CD8-positive, alpha-beta memory T cell (primary cell): ENCODE measurements at regions of chr7 and their contacts with region 1.

Region 1: DNA sequence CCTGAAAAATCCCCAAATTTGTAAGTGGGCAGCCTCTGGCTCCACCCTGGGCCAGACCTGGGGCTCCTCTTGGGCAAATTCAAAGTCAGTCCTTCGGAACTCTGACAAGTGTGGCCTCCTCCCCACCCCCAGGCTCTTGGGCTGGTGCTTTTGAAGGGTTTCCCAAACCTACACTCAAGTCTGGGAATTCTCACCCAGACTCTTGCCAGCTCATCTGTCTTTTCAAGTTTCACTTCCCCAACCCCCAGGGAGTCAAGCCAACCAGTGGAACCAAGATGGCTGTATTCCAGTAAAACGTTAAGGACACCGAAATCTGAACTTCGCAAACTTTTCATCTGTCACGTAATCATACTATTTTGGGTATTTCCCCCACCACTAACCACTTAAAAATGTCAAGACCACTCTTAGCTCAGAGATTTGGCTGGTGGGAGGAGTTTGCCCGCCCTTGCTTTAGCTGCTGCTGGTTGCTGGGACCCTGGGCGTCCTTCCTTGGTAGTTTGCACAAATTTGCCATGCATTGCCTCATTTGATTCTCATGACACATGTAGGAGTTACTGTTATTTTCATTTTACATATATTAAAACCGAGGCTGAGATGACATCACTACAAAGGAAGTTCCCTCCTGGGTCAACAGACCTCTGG is 1.7 kb upstream of the MYO1G start:
- DNase-seq: peak; percentile 58 to 86 (median 65)
- H3K4me3 ChIP-seq: peak overlapping the region; percentile 91
- H3K4me3 Mint-ChIP-seq: peak overlapping the region; percentile 96 to 98 (median 98)
- H3K27ac ChIP-seq: peak overlapping the region; percentile 94
- H3K27ac Mint-ChIP-seq: peak overlapping the region; percentile 87 to 100 (median 93)
- H3K4me1 ChIP-seq: peaks cover 76% of the 10 kb centered on the region
- H3K4me1 Mint-ChIP-seq: peaks cover 72 to 95% (median 76%) of the 10 kb centered on the region in 3 donors
- H3K27me3 ChIP-seq: no peaks in the 10 kb centered on the region
- H3K27me3 Mint-ChIP-seq: no peaks in the 10 kb centered on the region

Region 2: GRCh38 chr7:45026984-45027773 is 46.7 kb after region 1 on chr7:
- CTCF ChIA-PET with region 1: interaction called, 51 read pairs
- POLR2A ChIA-PET with region 1: interaction called, 10 read pairs
- DNase-seq: peak in 3 of 5 donors; percentile 59 to 75 (median 60)
- H3K4me3 ChIP-seq: peak overlapping the region; percentile 100
- H3K4me3 Mint-ChIP-seq: peak overlapping the region; percentile 83 to 98 (median 91)
- H3K27ac ChIP-seq: peak overlapping the region; percentile 87
- H3K27ac Mint-ChIP-seq: peak overlapping the region; percentile 62 to 99 (median 93)
- H3K4me1 ChIP-seq: peaks cover 49% of the 10 kb centered on the region
- H3K4me1 Mint-ChIP-seq: peaks cover 54 to 74% (median 72%) of the 10 kb centered on the region in 3 donors
- H3K27me3 ChIP-seq: no peaks in the 10 kb centered on the region
- H3K27me3 Mint-ChIP-seq: no peaks in the 10 kb centered on the region

Region 3: DNA sequence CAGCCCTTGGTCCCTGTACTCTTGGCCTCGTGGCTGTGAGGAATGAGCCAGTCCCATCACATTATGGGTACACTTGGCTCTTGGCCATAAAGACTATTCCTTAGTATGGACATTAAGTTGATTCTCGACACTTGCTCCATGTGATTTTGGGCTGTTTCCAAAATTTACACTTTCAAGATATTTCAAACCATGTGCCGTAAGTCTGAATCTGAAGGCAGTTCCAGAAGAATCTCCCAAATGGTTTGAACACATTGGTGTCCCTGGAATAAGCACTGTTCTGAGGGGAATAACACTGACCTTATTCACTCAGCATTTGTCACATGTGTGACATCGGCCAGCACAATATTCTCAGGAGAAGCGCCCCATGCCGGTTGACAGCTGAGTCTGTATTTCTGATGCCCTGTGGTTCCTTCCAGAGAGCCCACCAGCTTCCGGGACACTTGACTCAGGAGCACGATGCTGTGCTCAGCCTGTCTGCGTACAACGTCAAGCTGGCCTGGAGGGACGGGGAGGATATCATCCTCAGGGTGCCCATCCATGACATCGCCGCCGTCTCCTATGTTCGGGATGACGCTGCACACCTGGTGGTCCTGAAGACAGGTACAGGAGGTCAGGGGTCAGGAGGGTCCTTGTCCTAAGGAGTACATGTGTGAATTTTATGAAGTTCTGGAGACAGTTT is 83.7 kb after region 1 on chr7:
- CTCF ChIA-PET with region 1: no interaction called
- POLR2A ChIA-PET with region 1: no interaction called
- DNase-seq: no peak
- H3K4me3 ChIP-seq: no peak overlapping the region
- H3K4me3 Mint-ChIP-seq: no peak overlapping the region
- H3K27ac ChIP-seq: no peak overlapping the region
- H3K27ac Mint-ChIP-seq: peak overlapping the region in 5 of 8 donors; percentile 11 to 72 (median 37)
- H3K4me1 ChIP-seq: peaks cover 19% of the 10 kb centered on the region
- H3K4me1 Mint-ChIP-seq: peaks cover 38 to 74% (median 59%) of the 10 kb centered on the region in 3 donors
- H3K27me3 ChIP-seq: no peaks in the 10 kb centered on the region
- H3K27me3 Mint-ChIP-seq: no peaks in the 10 kb centered on the region